Activated T-helper 1 cell treated with anti-CD3 and anti-CD28 coated beads, Interleukin-12 subunit alpha, Interleukin-12 subunit beta, Interleukin-2, Interleukin-4 antibody, amounts not matched to agents 30 ng/mL and 10 ng/mL and 1 ng/mL, durations not matched to agents 14 hours and 24 hours and 36 hours (primary cell): ENCODE measurements at regions of chr1 and their contacts with region 1.

Region 1: DNA sequence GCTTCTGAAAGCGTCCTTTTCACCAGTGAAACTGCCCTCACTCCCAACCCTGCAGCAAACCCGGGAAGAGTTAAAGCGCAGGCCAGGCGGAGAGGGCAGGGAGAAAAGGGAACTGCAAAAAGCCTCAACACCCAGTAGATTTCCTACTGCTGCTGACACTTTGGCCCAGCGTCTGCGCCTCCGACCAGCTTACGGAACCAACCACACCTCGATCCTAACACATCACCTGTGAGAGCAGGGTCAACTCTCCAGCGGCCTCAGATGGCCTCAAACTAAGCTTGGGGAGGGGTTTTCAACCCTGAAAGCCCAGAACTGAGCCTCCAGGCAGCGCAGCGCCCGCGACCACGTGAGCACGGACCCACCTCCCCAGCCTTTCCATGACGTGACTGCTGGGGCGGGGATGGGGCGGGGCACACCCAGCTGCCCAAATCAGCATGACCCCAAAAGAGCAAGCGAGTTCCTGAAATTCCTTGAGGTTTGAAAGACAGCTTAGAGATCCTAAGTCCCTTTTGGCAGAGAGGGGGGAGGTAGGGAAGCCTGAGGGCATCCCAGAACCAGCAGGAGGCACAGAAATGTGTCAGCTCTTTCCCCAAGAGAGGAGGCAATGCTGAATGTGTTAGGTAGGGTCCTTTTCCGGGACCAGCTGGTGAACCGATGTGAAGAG is 59.1 kb downstream of the ITPKB start:
- DNase-seq: peak; percentile 65
- H3K4me3 Mint-ChIP-seq: peak overlapping the region; percentile 82
- H3K27ac Mint-ChIP-seq: peak overlapping the region; percentile 97
- H3K4me1 Mint-ChIP-seq: peaks cover 97% of the 10 kb centered on the region
- H3K27me3 Mint-ChIP-seq: no peaks in the 10 kb centered on the region

Region 2: GRCh38 chr1:226634166-226634588 is 45.8 kb before region 1 on chr1:
- intact Hi-C with region 1: loop called (anchors 1 kb)
- DNase-seq: peak; percentile 66
- H3K4me3 Mint-ChIP-seq: no peak overlapping the region
- H3K27ac Mint-ChIP-seq: peak overlapping the region; percentile 31
- H3K4me1 Mint-ChIP-seq: peaks cover 34% of the 10 kb centered on the region
- H3K27me3 Mint-ChIP-seq: no peaks in the 10 kb centered on the region

Region 3: GRCh38 chr1:226642876-226643576 is 37.0 kb before region 1 on chr1:
- intact Hi-C with region 1: loop called (anchors 2 kb)
- DNase-seq: peak; percentile 50
- H3K4me3 Mint-ChIP-seq: peak overlapping the region; percentile 63
- H3K27ac Mint-ChIP-seq: peak overlapping the region; percentile 87
- H3K4me1 Mint-ChIP-seq: peaks cover 38% of the 10 kb centered on the region
- H3K27me3 Mint-ChIP-seq: no peaks in the 10 kb centered on the region

Region 4: GRCh38 chr1:226653311-226653921 is 26.6 kb before region 1 on chr1:
- intact Hi-C with region 1: loop called (anchors 1 kb)
- DNase-seq: peak; percentile 40
- H3K4me3 Mint-ChIP-seq: peak overlapping the region; percentile 81
- H3K27ac Mint-ChIP-seq: peak overlapping the region; percentile 94
- H3K4me1 Mint-ChIP-seq: peaks cover 25% of the 10 kb centered on the region
- H3K27me3 Mint-ChIP-seq: no peaks in the 10 kb centered on the region

Region 5: GRCh38 chr1:226702957-226703831 is 23.2 kb after region 1 on chr1:
- intact Hi-C with region 1: loop called (anchors 1 kb)
- DNase-seq: peak; percentile 81
- H3K4me3 Mint-ChIP-seq: peak overlapping the region; percentile 77
- H3K27ac Mint-ChIP-seq: peak overlapping the region; percentile 89
- H3K4me1 Mint-ChIP-seq: peaks cover 57% of the 10 kb centered on the region
- H3K27me3 Mint-ChIP-seq: no peaks in the 10 kb centered on the region

Region 6: GRCh38 chr1:226708342-226708780 is 28.4 kb after region 1 on chr1:
- intact Hi-C with region 1: loop called (anchors 1 kb)
- DNase-seq: no peak
- H3K4me3 Mint-ChIP-seq: peak overlapping the region; percentile 59
- H3K27ac Mint-ChIP-seq: peak overlapping the region; percentile 94
- H3K4me1 Mint-ChIP-seq: peaks cover 72% of the 10 kb centered on the region
- H3K27me3 Mint-ChIP-seq: peaks cover 1% of the 10 kb centered on the region

Region 7: GRCh38 chr1:226786550-226786949 is 106.6 kb after region 1 on chr1:
- intact Hi-C with region 1: no loop called
- DNase-seq: no peak
- H3K4me3 Mint-ChIP-seq: no peak overlapping the region
- H3K27ac Mint-ChIP-seq: no peak overlapping the region
- H3K4me1 Mint-ChIP-seq: no peaks in the 10 kb centered on the region
- H3K27me3 Mint-ChIP-seq: peaks cover 20% of the 10 kb centered on the region

Region 8: DNA sequence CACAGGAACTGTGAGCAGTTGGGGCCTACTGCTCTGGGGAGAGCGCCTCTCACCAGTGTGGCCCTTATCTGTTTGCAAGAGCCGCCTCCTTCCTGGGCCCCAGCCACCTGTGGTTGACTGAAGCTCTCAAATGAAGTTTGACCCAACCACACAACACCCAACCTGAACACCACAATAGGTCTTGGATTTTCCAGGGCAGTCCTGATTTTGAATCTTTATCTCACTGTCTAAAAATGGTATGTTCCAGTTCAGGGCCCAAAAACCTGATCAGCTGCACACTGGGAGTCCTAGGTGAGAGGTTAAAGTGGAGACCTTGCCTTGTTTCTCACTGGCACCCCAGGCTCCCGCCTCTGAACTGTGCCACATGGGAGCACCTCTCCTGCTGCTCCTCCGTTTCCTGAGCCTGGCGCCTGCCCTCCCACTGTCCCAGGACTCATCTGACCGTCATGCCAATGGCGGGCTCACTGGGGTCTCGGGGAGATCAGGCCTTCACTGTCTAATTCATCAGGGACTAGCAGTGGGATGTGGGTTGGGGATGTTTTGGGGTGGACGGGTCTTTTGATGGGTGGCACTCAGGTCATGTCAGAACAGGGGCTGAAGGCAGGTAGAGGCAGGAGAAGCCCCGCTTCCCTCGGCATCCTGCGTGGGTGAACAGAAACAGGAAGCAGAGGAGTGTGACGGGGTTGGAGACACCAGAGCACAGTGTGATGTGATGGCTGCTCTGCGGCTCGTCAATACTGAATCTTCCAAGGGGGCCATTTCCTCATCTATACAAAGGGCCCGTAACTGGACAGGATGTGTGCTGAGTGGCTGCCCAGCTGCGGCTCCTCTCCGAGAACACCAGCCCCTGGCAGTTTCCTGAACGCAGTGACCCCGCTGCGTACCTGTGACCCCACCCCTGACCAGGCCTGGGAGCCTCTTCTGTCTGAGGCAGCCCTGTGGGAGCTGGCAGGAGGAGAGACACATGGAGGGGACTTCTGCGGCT is 118.7 kb after region 1 on chr1:
- intact Hi-C with region 1: loop called (anchors 5 kb)
- DNase-seq: peak; percentile 63
- H3K4me3 Mint-ChIP-seq: peak overlapping the region; percentile 68
- H3K27ac Mint-ChIP-seq: peak overlapping the region; percentile 88
- H3K4me1 Mint-ChIP-seq: peaks cover 26% of the 10 kb centered on the region
- H3K27me3 Mint-ChIP-seq: peaks cover 16% of the 10 kb centered on the region